Left cardiac atrium (tissue), 4 donors: ENCODE measurements at regions of chr17 and their contacts with region 1.

Region 1: DNA sequence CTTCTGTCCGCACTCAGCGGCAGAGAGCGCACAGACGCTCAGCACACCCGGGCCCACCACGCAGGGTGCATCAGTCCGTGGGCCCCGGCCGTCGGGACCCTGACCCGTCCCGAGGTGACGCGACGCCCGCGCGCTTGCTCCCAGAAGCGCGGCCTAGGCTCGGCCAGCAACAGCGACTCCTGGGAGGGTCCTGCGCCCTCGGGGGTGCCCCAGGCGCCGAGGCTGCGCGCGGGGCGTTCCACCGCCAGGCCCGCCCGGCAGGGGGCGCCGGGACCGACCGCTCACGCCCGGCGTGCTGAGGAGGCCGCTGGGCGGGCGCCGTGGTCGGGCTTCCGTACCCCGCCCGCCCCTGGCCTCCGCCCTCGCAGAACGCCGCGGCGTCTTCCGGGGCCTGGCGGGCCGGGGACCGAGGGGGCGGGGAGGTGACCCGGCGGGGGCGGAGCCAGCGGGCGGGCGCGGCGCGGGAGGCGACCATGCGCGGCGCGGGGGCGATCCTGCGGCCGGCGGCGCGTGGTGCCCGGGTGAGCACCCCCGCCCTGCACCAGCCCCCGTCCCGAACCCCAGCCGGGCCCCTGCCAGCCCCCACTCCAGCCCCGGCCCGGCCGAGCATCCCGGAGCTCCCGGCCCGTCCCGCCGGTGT is at the start of gene CISD3:
- DNase-seq: peak; percentile 91
- ATAC-seq: peak; percentile 83 to 93
- total RNA-seq, gene CISD3: 51.1 to 66.2 TPM

Region 2: GRCh38 chr17:38674749-38675615 is 55.0 kb before region 1 on chr17 and contains the start of gene EPOP:
- intact Hi-C with region 1: loop called (anchors 2 to 5 kb)
- DNase-seq: peak; percentile 91
- ATAC-seq: peak; percentile 92 to 93
- total RNA-seq, gene EPOP: 1.4 to 3.9 TPM

Region 3: GRCh38 chr17:38693700-38694329 is 36.2 kb before region 1 on chr17:
- intact Hi-C with region 1: loop called (anchors 5 kb)
- DNase-seq: peak; percentile 91
- ATAC-seq: peak; percentile 98 to 99

Region 4: GRCh38 chr17:38702166-38702899 is 27.7 kb before region 1 on chr17:
- intact Hi-C with region 1: loop called in 1 of 2 experiments (anchors 5 kb)
- DNase-seq: peak; percentile 91
- ATAC-seq: peak; percentile 73 to 82

Region 5: GRCh38 chr17:38777641-38778250 is 47.7 kb after region 1 on chr17:
- intact Hi-C with region 1: no loop called
- DNase-seq: no peak
- ATAC-seq: no peak

Region 6: GRCh38 chr17:38799378-38800236 is 69.6 kb after region 1 on chr17 and contains the start of gene PIP4K2B:
- intact Hi-C with region 1: no loop called
- DNase-seq: peak; percentile 97
- ATAC-seq: peak; percentile 94 to 97
- total RNA-seq, gene PIP4K2B: 36.1 to 42.0 TPM